HEK293 (cell line): ENCODE measurements at regions of chr7 and their contacts with region 1.

Region 1: DNA sequence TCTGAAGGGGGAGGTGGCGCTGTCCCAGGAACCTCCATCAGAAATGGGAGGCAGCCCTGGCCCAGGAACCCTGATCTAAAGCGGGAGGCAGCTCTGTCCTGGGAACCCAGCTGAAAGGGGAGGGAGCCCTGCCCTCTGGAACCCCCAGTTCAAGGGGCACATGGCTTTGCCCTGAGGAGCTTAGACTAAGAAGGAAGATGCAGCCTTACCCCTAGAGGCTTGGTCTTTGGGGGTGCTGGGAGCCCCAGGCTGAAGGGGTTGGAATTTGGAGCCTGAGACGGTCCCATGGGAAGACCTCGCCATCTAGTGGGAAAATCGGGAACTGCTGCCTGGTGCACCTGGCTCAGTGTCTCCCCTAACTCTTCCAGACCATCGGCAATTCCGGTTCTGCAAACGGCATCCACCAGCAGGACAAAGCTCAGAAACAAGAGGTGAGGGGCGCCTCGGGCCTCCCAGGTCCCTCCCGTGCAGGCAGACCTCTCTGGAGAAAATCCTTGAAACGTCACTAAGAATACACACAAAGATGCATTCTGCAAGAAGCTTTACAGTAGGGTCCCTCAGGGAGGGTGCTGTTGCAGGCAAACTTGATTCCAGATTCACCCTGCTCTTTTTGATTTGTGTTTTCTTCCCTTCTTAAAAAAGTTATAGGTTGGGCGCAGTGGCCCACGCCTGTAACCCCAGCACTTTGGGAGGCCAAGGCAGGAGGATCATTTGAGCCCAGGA is 52.4 kb upstream of the GTF2IRD1 start:
- H3K4me3 ChIP-seq: no peak overlapping the region
- H3K27ac ChIP-seq: no peak overlapping the region
- H3K4me1 ChIP-seq: no peaks in the 10 kb centered on the region
- CTCF ChIP-seq: peak; percentile 72

Region 2: GRCh38 chr7:74068393-74069085 is 332.8 kb before region 1 on chr7:
- CTCF ChIA-PET with region 1: interaction called, 16 read pairs
- POLR2A ChIA-PET with region 1: interaction called, 3 read pairs
- H3K4me3 ChIP-seq: no peak overlapping the region
- H3K27ac ChIP-seq: no peak overlapping the region
- H3K4me1 ChIP-seq: no peaks in the 10 kb centered on the region
- CTCF ChIP-seq: no peak

Region 3: DNA sequence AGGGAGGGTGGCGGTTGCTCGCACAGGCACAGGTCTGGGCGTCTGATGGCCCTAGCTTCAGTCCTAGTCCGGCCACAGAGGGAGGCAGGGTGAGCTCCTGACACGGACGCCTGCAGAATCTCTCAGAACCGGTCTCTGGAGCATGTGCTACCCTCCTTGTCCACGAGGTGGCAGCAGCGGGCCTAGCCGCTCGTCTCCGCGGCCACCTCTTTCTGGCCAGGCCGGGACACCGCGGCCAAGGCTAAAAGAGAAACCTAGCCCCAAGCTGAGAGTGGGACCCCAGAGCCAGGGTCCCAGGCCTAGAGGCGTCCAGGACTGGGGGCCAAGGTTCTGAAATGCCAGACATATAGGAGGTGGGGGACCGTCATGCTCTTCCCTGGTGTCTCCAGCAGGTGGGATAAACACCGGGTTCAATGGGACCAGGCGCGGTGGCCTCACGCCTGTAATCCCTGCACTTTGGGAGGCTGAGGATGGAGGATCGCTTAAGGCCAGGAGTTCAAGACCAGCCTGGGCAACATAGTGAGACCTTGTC is 194.6 kb before region 1 on chr7:
- CTCF ChIA-PET with region 1: interaction called, 126 read pairs
- POLR2A ChIA-PET with region 1: no interaction called
- H3K4me3 ChIP-seq: no peak overlapping the region
- H3K27ac ChIP-seq: no peak overlapping the region
- H3K4me1 ChIP-seq: no peaks in the 10 kb centered on the region
- CTCF ChIP-seq: peak; percentile 81

Region 4: DNA sequence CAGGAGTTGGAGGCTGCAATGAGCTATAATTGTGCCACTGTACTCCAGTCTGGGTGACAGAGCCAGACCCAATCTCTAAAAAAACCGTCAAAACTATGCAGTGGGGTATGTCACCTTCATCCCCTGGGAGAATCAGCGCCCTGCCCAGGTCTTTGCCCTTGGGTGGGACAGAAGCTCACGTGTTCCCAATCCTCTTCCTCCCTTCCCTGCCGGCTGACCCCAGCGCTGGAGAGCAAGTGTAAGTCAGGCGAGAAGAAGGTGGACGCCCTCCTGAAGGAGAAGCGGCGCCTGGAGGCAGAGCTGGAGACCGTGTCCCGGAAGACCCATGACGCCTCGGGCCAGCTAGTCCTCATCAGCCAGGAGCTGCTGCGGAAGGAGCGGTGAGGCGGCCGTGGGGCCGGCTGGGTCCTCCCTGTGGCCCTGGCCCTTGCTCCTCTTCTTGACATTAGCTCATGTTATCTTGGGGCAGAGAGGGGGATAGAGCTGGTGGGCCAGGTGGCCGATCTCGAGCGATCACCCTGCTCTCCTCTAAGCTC is 12.3 kb before region 1 on chr7:
- CTCF ChIA-PET with region 1: interaction called, 35 read pairs
- POLR2A ChIA-PET with region 1: no interaction called
- H3K4me3 ChIP-seq: no peak overlapping the region
- H3K27ac ChIP-seq: no peak overlapping the region
- H3K4me1 ChIP-seq: no peaks in the 10 kb centered on the region
- CTCF ChIP-seq: no peak

Region 5: GRCh38 chr7:74417419-74417971 is 16.2 kb after region 1 on chr7:
- CTCF ChIA-PET with region 1: interaction called, 40 read pairs
- POLR2A ChIA-PET with region 1: no interaction called
- H3K4me3 ChIP-seq: no peak overlapping the region
- H3K27ac ChIP-seq: no peak overlapping the region
- H3K4me1 ChIP-seq: no peaks in the 10 kb centered on the region
- CTCF ChIP-seq: peak; percentile 80

Region 6: GRCh38 chr7:74525880-74526279 is 124.6 kb after region 1 on chr7:
- CTCF ChIA-PET with region 1: no interaction called
- POLR2A ChIA-PET with region 1: no interaction called
- H3K4me3 ChIP-seq: no peak overlapping the region
- H3K27ac ChIP-seq: no peak overlapping the region
- H3K4me1 ChIP-seq: no peaks in the 10 kb centered on the region
- CTCF ChIP-seq: no peak